IMR-90 (cell line): ENCODE measurements at regions of chr6 and their contacts with region 1.

Region 1: DNA sequence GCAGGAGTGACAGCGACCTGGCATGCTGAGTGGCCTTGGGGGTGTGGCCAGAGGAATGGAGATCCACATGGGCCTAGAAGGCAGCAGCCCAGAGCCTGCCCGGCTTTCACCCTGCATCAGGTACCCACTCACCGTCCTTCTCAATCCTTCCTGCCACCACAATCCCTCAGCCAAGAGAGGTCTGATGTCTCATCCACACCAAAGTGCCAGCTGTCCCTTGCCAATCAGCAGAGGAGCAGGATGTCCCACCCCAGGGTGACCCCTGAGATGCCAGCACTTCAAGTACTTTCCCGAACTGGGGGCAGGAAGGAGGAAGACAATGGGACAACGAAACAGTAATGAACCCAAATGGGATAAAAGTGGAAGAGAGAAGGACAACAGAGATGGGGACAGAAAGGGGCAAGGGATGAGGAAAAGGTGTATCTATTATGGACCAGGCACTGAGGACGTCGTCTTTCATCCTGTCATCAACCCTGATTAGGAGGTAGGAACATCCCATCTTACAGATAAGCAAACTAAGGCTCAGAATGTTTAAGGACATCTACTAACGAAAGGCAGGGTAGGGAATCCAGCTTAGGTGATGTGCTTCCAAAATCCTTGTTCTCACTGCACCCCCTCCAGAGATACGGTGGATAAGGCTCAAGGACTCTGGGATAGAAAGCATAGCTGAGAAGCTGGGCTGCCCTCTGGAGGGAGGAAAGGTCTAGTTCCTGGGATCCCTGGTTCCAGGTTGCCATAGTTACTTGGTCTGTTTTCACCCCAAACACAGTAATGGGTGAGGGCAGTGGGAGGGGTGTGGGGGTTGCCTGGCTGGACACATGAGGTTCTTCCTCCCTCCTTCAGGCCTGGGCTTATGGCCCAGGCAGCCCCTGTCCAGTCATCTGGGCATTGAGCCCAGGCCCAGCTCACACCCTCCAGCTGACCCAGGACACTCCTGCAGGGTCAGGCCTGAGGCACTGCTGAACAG is 4.5 kb upstream of the TNXB start:
- DNase-seq: peak; percentile 94
- ATAC-seq: peak; percentile 76
- H3K4me3 ChIP-seq: no peak overlapping the region
- H3K27ac ChIP-seq: peak overlapping the region; percentile 56; the same call in 1 of the 2 replicates
- H3K4me1 ChIP-seq: peaks cover 23% of the 10 kb centered on the region
- H3K27me3 ChIP-seq: peaks cover 10% of the 10 kb centered on the region; the same call in 1 of the 2 replicates
- CTCF ChIP-seq: peak; percentile 78
- POLR2A ChIP-seq: 0 out of 2 replicates have a peak, but pooled peaks have one; percentile 32
- RAD21 ChIP-seq: peak; percentile 79

Region 2: DNA sequence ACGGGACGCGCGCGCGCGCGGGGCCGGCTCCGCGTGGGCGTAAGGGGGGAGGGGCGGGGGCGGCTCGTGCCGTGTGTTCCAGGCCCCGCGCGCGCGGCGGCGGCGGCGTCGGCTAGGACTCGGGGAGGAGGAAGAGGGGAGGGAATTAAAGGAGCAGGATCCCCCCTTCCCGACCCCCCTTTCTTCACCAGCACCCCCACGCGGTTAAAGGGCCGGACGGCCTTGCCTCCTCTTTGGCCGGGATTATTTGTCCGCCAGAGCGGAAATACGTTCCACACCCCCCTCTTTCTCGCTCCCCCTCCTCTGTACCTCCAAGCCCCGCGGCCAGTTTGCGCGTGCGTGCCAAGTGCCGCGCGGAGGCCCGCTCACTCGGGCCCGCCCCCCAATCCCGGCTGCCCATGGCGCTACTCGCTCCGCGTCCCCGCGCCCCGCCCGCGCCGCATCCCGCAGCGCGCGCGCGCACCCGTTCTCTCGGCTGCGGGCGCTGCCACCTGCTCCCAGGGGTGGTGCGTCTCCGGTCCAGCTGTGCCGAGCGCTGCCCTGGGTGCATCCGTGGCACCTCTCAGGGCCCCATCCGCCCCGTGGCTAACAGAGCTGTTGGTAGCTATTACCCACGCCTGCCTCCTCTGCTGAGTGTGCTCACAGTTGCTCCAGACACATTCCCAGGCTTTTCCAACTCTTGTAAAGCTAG is 211.6 kb before region 1 on chr6 and contains the start of gene ZBTB12:
- CTCF ChIA-PET with region 1: no interaction called
- POLR2A ChIA-PET with region 1: no interaction called
- dilution Hi-C with region 1: no loop called
- in situ Hi-C with region 1: no loop called
- intact Hi-C with region 1: loop called (anchors 2 kb)
- DNase-seq: peak; percentile 98
- ATAC-seq: peak; percentile 78
- H3K4me3 ChIP-seq: peak within 1 kb of the TSS; percentile 58
- H3K27ac ChIP-seq: peak within 1 kb of the TSS; percentile 69
- H3K4me1 ChIP-seq: peaks cover 10% of the 10 kb centered on the region
- H3K27me3 ChIP-seq: no peaks in the 10 kb centered on the region
- CTCF ChIP-seq: peak; percentile 13; the same call in 1 of the 2 replicates
- POLR2A ChIP-seq: no peak
- RAD21 ChIP-seq: peak; percentile 71
- total RNA-seq, gene ZBTB12: 2.0 and 2.5 TPM in 2 replicates

Region 3: GRCh38 chr6:31958741-31959739 is 154.6 kb before region 1 on chr6 and contains the starts of genes NELFE and SKIC2:
- CTCF ChIA-PET with region 1: no interaction called
- POLR2A ChIA-PET with region 1: no interaction called
- dilution Hi-C with region 1: no loop called
- in situ Hi-C with region 1: no loop called
- intact Hi-C with region 1: loop called (anchors 5 kb)
- DNase-seq: peak; percentile 98
- ATAC-seq: peak; percentile 99
- H3K4me3 ChIP-seq: peak within 1 kb of the TSS; percentile 75
- H3K27ac ChIP-seq: peak within 1 kb of the TSS; percentile 74
- H3K4me1 ChIP-seq: peaks cover 7% of the 10 kb centered on the region; the same call in 1 of the 2 replicates
- H3K27me3 ChIP-seq: no peaks in the 10 kb centered on the region
- CTCF ChIP-seq: no peak
- POLR2A ChIP-seq: peak; percentile 64
- RAD21 ChIP-seq: peak; percentile 9; the same call in 1 of the 2 replicates
- total RNA-seq, gene NELFE: 76.0 and 90.8 TPM in 2 replicates
- total RNA-seq, gene SKIC2: 30.6 and 34.7 TPM in 2 replicates

Region 4: DNA sequence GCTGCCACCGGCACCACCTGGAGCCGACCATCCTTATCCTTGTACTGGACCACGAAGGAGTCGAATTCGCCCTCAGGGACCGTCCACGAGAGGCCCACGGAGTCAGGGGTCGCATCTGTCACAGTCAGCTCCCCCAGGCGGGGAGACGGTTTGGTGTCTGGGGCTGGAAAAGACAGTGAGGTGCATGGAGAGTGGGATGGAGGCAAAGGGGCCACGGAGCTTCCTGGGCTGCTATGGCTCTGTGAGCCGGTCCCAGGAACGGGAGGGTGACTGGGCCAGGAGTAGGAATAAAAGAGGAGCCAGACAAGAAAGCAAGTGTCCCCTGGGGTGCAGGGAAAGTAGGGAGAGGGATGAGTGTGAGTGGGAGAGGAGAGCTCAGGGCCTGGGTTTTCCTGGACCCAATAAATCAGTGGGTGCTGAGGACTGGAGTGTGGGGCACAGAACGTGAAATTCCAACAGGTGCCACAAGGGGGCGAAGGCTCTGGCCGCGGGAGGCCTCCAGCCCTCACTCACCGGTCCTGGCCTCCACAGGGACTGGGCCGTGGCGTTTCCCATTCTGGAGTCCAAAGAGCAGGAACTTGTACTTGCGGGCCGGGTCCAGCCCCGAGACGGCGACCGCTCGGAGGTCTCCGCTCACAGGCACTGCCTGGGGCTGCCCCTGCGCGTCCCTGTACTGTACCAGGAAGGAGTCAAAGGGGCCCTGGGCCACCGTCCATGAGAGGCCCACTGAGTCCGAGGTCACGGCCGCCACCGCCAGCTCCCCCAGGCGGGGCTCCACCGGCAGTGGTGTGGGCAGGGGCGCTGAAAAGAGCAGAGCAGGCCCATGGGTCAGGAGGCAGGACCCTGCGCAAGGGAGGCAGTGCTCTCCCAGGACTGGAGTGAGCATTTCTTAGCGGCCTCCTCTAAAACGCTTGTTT is 65.6 kb before region 1 on chr6:
- CTCF ChIA-PET with region 1: interaction called, 3 read pairs
- POLR2A ChIA-PET with region 1: no interaction called
- dilution Hi-C with region 1: no loop called
- in situ Hi-C with region 1: no loop called
- intact Hi-C with region 1: loop called (anchors 2 kb)
- DNase-seq: peak; percentile 30
- ATAC-seq: peak; percentile 88
- H3K4me3 ChIP-seq: no peak overlapping the region
- H3K27ac ChIP-seq: no peak overlapping the region
- H3K4me1 ChIP-seq: peaks cover 16% of the 10 kb centered on the region; the same call in 1 of the 2 replicates
- H3K27me3 ChIP-seq: peaks cover 23% of the 10 kb centered on the region
- CTCF ChIP-seq: peak; percentile 74
- POLR2A ChIP-seq: no peak
- RAD21 ChIP-seq: peak; percentile 77